ENCODE measurements at regions of chr22 and their contacts with region 1.

Region 1: GRCh38 chr22:23970816-23971486 is 3.3 kb downstream of the DDT start:
- DNase-seq: no peak
- ATAC-seq: no peak

Region 2: DNA sequence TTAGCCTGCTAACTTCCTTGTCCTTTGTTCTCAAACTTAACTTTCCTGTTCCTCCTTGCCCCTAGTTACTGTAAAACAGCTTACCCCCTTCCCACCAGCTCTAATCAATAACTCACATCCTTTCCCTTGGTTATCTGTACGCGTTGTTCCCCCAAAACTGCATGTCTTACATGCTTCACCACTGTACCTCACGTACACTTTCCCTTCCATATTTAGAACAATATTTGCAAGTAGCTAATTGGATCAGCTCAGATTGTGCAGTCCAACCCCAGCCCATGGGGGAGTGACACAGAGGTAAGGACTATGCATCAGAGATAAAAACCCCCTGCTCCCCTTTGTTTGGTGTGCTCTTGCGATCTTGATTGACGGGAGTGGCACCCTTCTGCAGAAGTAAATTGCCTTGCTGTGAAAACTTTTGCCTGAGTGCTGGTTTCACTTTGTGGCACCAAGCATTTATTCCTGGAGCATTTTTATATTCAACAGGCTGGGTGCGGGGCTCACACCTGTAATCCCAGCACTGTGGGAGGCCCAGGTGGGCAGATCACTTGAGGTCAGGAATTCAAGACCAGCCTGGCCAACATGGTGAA is 45.8 kb before region 1 on chr22:
- intact Hi-C with region 1: loop called (anchors 5 kb)
- DNase-seq: no peak
- ATAC-seq: no peak

Region 3: GRCh38 chr22:24355574-24355973 is 384.6 kb after region 1 on chr22:
- intact Hi-C with region 1: no loop called
- DNase-seq: no peak
- ATAC-seq: no peak